ENCODE measurements at regions of chr7 and their contacts with region 1.

Region 1: GRCh38 chr7:107860981-107861652 is 29.9 kb upstream of the DLD start:
- DNase-seq: no peak
- H3K4me3 ChIP-seq: no peak overlapping the region
- H3K4me3 Mint-ChIP-seq: peak overlapping the region; percentile 4
- H3K27ac Mint-ChIP-seq: no peak overlapping the region
- H3K4me1 ChIP-seq: peaks cover 26% of the 10 kb centered on the region
- H3K4me1 Mint-ChIP-seq: peaks cover 18% of the 10 kb centered on the region
- H3K27me3 ChIP-seq: no peaks in the 10 kb centered on the region
- H3K27me3 Mint-ChIP-seq: no peaks in the 10 kb centered on the region
- CTCF ChIP-seq: no peak

Region 2: GRCh38 chr7:107830420-107830819 is 30.7 kb before region 1 on chr7:
- CTCF ChIA-PET with region 1: no interaction called
- POLR2A ChIA-PET with region 1: no interaction called
- intact Hi-C with region 1: loop called (anchors 1 kb)
- DNase-seq: no peak
- H3K4me3 ChIP-seq: no peak overlapping the region
- H3K4me3 Mint-ChIP-seq: no peak overlapping the region
- H3K27ac Mint-ChIP-seq: no peak overlapping the region
- H3K4me1 ChIP-seq: peaks cover 7% of the 10 kb centered on the region; the same call in 1 of the 2 replicates
- H3K4me1 Mint-ChIP-seq: peaks cover 9% of the 10 kb centered on the region
- H3K27me3 ChIP-seq: no peaks in the 10 kb centered on the region
- H3K27me3 Mint-ChIP-seq: no peaks in the 10 kb centered on the region
- CTCF ChIP-seq: no peak

Region 3: DNA sequence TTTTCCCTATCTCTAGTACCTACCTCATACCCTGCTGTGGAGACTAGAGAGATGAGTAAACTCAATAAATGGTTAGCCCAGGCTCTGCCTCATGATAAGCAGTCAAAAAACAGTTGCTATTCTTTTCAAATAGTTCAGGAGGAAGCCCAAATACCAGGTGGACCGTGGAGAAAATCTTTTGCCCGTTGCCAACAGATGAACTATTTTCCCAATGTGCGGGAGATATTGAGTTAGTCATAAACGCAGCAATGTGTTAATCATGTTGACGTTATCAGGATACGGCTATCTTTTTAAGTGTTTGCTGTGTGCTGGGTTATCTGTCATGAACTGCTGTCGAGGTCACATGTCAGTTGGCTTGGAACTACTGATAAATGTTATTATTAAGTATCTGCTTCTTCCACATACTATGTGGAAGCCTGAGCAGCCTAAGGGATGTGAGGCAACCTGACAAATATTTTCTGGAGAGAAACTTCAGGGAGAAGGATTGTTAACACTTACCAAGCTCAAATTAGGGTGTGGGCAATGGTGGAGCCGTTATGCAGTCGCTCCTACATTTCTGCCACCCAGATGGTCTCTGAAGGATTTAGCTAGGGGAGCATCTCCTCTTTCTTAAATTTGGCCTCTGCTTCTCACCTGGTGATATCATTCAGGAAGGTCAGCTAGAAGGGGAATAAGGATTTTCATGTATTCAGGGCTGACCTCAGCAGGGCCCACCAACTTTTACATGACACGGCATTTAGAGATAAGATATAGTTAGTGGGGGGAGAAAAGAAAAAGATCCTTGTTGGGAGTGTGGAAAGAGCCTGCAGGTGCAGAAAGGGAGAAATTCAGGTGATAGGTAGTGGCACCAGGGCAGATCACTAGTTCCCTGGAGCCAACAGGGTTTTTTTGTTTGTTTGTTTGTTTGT is 24.6 kb before region 1 on chr7:
- CTCF ChIA-PET with region 1: no interaction called
- POLR2A ChIA-PET with region 1: no interaction called
- intact Hi-C with region 1: loop called (anchors 2 kb)
- DNase-seq: peak; percentile 47 to 67
- H3K4me3 ChIP-seq: no peak overlapping the region
- H3K4me3 Mint-ChIP-seq: no peak overlapping the region
- H3K27ac Mint-ChIP-seq: no peak overlapping the region
- H3K4me1 ChIP-seq: peaks cover 24% of the 10 kb centered on the region
- H3K4me1 Mint-ChIP-seq: peaks cover 18% of the 10 kb centered on the region
- H3K27me3 ChIP-seq: no peaks in the 10 kb centered on the region
- H3K27me3 Mint-ChIP-seq: no peaks in the 10 kb centered on the region
- CTCF ChIP-seq: no peak

Measured in Caco-2 (cell line).